ENCODE measurements at regions of chr7 and their contacts with region 1.

Region 1: DNA sequence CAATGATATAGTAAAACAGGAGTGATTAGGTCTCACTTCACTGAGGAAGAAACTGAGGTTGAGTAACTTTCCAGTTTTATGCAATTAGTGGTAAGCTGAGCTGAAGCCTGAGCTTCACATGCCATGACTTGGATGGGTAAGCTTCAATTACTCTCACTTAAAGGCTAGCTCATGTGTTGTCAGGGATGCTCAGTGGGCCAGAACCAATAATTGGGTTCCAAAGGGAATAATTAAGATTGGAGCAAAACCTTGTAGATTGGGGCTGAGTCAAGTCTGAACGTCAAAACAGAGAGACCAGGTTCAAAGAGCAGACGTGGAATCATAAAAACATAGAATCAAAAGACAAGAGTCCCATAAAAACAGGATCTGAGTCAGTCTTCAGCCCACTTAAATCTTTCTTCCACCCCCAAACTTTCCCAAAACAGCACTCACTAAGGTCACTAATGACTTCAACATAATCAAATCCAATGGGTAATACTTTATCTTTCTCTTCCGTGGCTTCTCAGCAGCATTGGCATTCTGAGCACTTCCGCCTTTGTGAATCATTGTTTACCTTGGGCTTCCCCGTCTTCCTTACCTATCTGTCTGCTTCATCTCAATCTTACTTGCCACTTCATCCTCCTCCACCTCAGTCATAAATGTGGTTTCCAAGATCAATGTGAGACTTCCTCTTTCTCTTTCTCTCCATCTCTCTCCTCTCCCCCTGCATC is 23.0 kb upstream of the EGFR start:
- DNase-seq: peak; percentile 32
- H3K4me3 Mint-ChIP-seq: peak overlapping the region; percentile 19
- H3K27ac Mint-ChIP-seq: peak overlapping the region; percentile 70
- H3K4me1 Mint-ChIP-seq: peaks cover 26% of the 10 kb centered on the region
- H3K27me3 Mint-ChIP-seq: peaks cover 10% of the 10 kb centered on the region

Region 2: GRCh38 chr7:55073945-55074499 is 78.2 kb after region 1 on chr7:
- intact Hi-C with region 1: loop called (anchors 1 kb)
- DNase-seq: peak; percentile 9
- H3K4me3 Mint-ChIP-seq: no peak overlapping the region
- H3K27ac Mint-ChIP-seq: peak overlapping the region; percentile 6
- H3K4me1 Mint-ChIP-seq: peaks cover 17% of the 10 kb centered on the region
- H3K27me3 Mint-ChIP-seq: peaks cover 12% of the 10 kb centered on the region

Region 3: GRCh38 chr7:55132890-55133551 is 137.2 kb after region 1 on chr7:
- intact Hi-C with region 1: loop called (anchors 1 kb)
- DNase-seq: no peak
- H3K4me3 Mint-ChIP-seq: no peak overlapping the region
- H3K27ac Mint-ChIP-seq: peak overlapping the region; percentile 37
- H3K4me1 Mint-ChIP-seq: peaks cover 22% of the 10 kb centered on the region
- H3K27me3 Mint-ChIP-seq: peaks cover 4% of the 10 kb centered on the region

Region 4: GRCh38 chr7:55309040-55309991 is 313.5 kb after region 1 on chr7:
- intact Hi-C with region 1: loop called (anchors 1 kb)
- DNase-seq: peak; percentile 61
- H3K4me3 Mint-ChIP-seq: peak overlapping the region; percentile 20
- H3K27ac Mint-ChIP-seq: peak overlapping the region; percentile 93
- H3K4me1 Mint-ChIP-seq: peaks cover 36% of the 10 kb centered on the region
- H3K27me3 Mint-ChIP-seq: peaks cover 20% of the 10 kb centered on the region

Region 5: GRCh38 chr7:55415173-55415778 is 419.5 kb after region 1 on chr7:
- intact Hi-C with region 1: loop called (anchors 10 kb)
- DNase-seq: peak; percentile 65
- H3K4me3 Mint-ChIP-seq: no peak overlapping the region
- H3K27ac Mint-ChIP-seq: peak overlapping the region; percentile 20
- H3K4me1 Mint-ChIP-seq: peaks cover 4% of the 10 kb centered on the region
- H3K27me3 Mint-ChIP-seq: no peaks in the 10 kb centered on the region

Measured in activated T-helper 1 cell treated with anti-CD3 and anti-CD28 coated beads, Interleukin-12 subunit alpha, Interleukin-12 subunit beta, Interleukin-2, Interleukin-4 antibody, amounts not matched to agents 30 ng/mL and 10 ng/mL and 1 ng/mL, durations not matched to agents 14 hours and 24 hours and 36 hours (primary cell).